ENCODE measurements at regions of chr11 and their contacts with region 1.

Region 1: DNA sequence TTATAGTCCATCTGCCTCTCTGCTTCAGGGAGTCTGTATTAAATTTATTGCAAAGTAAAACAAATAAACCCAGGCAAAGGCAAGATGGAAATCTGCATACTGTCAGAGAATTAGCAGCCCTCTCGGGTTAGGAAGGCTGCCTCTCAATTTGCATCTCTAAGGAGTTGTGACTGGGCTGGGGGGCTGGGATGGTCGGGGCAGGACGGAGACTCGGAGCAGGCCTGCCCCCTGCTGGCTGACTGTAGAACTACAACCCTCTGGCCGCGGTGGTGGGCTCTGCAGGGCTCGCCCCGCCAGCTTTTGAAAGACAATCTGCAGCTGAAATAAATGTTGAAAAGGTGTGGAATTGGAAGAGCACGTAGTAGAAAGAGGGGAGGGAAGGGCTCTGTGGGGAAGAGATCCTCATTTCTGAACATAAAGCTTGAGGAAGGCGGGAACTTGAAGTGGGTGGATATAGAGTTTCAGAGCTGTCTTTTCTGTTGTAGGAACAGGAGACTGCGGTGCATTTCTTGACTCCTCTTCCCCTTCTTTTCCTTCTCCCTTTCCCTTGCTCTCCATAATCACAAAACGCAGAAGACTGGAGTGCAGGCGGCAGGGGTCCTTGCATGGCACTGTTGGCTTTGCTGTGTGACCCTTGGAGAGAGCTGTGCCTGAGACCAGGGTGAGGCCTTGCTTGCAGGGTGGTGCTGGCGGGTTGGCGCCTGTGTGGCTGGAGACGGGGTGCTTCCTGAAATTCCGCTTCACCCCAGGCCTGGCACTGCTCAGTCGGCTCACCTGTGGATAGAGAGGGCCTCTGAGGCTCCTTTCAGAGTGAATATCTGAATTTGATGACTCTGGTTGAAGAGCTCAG is 22.6 kb upstream of the PKNOX2 start:
- DNase-seq: peak in 2 of 3 donors; percentile 46 to 52
- ATAC-seq: peak; percentile 73
- H3K4me3 ChIP-seq: no peak overlapping the region
- H3K4me1 ChIP-seq: no peaks in the 10 kb centered on the region
- CTCF ChIP-seq: peak; percentile 86

Region 2: DNA sequence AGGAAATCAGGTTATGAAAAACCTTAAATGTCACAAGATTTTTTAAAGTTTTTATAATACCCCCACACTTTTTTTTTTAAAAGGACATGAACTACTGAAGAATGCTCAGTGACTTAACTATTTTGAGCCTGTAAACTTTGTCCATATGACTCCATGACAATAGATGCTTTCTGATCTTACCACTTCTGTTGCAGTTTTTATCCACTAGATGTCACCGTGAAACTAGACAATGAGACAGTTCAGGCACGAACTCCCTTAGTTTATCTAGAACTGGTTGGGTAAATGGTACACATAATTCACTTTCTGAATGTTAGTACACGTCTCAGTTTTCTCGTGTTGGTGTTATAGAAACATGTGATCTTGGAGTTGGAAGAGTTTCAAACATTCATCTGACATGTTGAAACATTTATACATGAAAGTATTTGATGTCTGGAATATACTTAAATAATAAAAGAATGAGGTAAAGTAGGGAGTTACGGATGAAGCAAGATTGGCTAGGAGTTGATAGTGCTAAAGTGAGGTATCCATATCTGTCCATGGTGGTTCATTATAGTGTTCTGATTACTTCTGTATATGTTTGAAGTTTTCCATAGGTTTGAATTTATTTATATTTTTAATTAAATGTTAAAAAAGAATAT is 179.8 kb before region 1 on chr11:
- intact Hi-C with region 1: loop called (anchors 5 to 10 kb)
- DNase-seq: peak in 1 of 3 donors; percentile 51
- ATAC-seq: peak; percentile 76
- H3K4me3 ChIP-seq: no peak overlapping the region
- H3K4me1 ChIP-seq: no peaks in the 10 kb centered on the region
- CTCF ChIP-seq: peak; percentile 28